B cell (primary cell): ENCODE measurements at regions of chr3 and their contacts with region 1.

Region 1: DNA sequence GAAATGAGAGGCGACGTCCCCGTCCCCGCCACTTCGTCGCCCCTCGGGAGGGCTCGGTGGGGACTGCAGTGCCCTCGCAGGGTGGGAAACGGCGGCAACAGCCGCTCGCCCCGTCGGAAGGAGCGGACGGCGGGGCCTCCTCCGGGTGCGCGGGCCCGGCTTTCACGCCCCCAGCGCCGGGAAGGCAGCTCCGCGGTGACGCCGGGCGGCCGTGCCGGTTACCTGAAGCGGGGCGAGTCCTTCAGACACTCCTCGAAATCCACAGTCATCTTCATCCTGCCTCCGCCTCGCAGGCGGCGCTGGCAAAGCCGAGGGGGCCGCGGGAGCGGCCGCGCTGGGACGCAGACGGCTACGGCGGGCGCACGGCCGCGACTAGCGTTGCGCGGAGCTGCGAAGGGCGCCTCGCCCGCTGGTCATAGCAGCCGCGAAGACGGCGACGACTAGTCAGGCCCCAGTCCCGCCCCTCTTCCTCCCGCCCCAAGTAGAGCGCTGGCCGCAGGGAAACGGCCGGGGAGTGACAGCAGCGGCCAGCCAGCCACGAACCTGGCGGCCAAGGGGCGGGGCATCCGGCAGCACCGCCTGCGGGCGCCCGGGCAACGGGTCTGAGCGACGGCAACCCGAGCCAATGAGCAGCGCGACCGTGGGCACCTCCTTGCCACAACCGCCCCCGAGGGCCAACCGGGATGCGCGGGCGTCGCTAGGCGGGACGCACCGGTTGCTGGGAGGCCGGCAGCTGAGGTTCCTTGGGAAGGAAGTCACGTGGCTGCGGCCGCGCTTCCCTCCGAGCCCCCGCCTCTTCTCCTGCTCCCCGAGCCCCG is at the start of gene ACAP2:
- DNase-seq: peak; percentile 99
- ATAC-seq: peak; percentile 87
- H3K4me3 ChIP-seq: peak within 1 kb of the TSS; percentile 69 to 92 (median 84)
- H3K4me3 Mint-ChIP-seq: peak within 1 kb of the TSS; percentile 94
- H3K27ac ChIP-seq: peak within 1 kb of the TSS; percentile 83 to 88
- H3K27ac Mint-ChIP-seq: peak within 1 kb of the TSS; percentile 97
- H3K4me1 ChIP-seq: peaks cover 29 to 33% of the 10 kb centered on the region in 2 donors
- H3K4me1 Mint-ChIP-seq: peaks cover 40% of the 10 kb centered on the region
- H3K27me3 ChIP-seq: no peaks in the 10 kb centered on the region
- H3K27me3 Mint-ChIP-seq: no peaks in the 10 kb centered on the region
- CTCF ChIP-seq: no peak
- total RNA-seq, gene ACAP2: 108 and 113 TPM in 2 replicates

Region 2: GRCh38 chr3:195094171-195094921 is 348.4 kb before region 1 on chr3:
- CTCF ChIA-PET with region 1: no interaction called
- POLR2A ChIA-PET with region 1: no interaction called
- intact Hi-C with region 1: no loop called
- DNase-seq: peak; percentile 87
- ATAC-seq: peak; percentile 85
- H3K4me3 ChIP-seq: peak overlapping the region in 4 of 5 experiments; percentile 36 to 63 (median 52)
- H3K4me3 Mint-ChIP-seq: peak overlapping the region; percentile 81
- H3K27ac ChIP-seq: peak overlapping the region; percentile 89 to 95
- H3K27ac Mint-ChIP-seq: peak overlapping the region; percentile 93
- H3K4me1 ChIP-seq: peaks cover 44 to 49% of the 10 kb centered on the region in 2 donors
- H3K4me1 Mint-ChIP-seq: peaks cover 54% of the 10 kb centered on the region
- H3K27me3 ChIP-seq: no peaks in the 10 kb centered on the region
- H3K27me3 Mint-ChIP-seq: no peaks in the 10 kb centered on the region
- CTCF ChIP-seq: no peak

Region 3: DNA sequence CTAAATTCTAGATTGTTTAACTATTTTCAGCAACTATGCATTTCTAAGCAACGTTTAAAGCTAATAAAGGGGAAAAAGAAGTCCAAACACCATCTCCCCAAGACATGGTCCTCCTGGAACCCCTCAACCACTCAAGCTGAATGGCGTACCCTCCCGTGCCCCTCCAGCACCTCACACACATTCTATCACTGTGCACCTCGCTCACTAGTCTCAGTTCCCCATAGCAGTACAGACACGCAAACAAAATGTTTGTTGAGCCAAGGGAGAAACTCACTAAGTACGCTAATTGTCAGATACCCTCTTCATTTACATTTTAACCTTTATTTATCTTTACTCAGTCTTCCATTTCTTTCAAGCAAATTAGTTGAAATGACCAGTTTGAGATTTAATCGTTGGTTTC is 48.8 kb before region 1 on chr3:
- CTCF ChIA-PET with region 1: no interaction called
- POLR2A ChIA-PET with region 1: interaction called, 8 read pairs
- intact Hi-C with region 1: loop called (anchors 2 kb)
- DNase-seq: peak; percentile 37
- ATAC-seq: peak; percentile 71
- H3K4me3 ChIP-seq: peak overlapping the region in 1 of 5 experiments; percentile 27
- H3K4me3 Mint-ChIP-seq: peak overlapping the region; percentile 65
- H3K27ac ChIP-seq: peak overlapping the region; percentile 18 to 68
- H3K27ac Mint-ChIP-seq: peak overlapping the region; percentile 69
- H3K4me1 ChIP-seq: peaks cover 26 to 41% of the 10 kb centered on the region in 2 donors
- H3K4me1 Mint-ChIP-seq: peaks cover 48% of the 10 kb centered on the region
- H3K27me3 ChIP-seq: no peaks in the 10 kb centered on the region
- H3K27me3 Mint-ChIP-seq: no peaks in the 10 kb centered on the region
- CTCF ChIP-seq: no peak

Region 4: GRCh38 chr3:195458316-195458717 is 15.5 kb after region 1 on chr3:
- CTCF ChIA-PET with region 1: interaction called, 3 read pairs
- POLR2A ChIA-PET with region 1: no interaction called
- intact Hi-C with region 1: loop called (anchors 1 kb)
- DNase-seq: peak; percentile 53
- ATAC-seq: peak; percentile 88
- H3K4me3 ChIP-seq: no peak overlapping the region
- H3K4me3 Mint-ChIP-seq: peak overlapping the region; percentile 27
- H3K27ac ChIP-seq: peak overlapping the region in 1 of 2 donors; percentile 32
- H3K27ac Mint-ChIP-seq: peak overlapping the region; percentile 85
- H3K4me1 ChIP-seq: peaks cover 9 to 10% of the 10 kb centered on the region in 2 donors
- H3K4me1 Mint-ChIP-seq: peaks cover 8% of the 10 kb centered on the region
- H3K27me3 ChIP-seq: no peaks in the 10 kb centered on the region
- H3K27me3 Mint-ChIP-seq: no peaks in the 10 kb centered on the region
- CTCF ChIP-seq: no peak

Region 5: DNA sequence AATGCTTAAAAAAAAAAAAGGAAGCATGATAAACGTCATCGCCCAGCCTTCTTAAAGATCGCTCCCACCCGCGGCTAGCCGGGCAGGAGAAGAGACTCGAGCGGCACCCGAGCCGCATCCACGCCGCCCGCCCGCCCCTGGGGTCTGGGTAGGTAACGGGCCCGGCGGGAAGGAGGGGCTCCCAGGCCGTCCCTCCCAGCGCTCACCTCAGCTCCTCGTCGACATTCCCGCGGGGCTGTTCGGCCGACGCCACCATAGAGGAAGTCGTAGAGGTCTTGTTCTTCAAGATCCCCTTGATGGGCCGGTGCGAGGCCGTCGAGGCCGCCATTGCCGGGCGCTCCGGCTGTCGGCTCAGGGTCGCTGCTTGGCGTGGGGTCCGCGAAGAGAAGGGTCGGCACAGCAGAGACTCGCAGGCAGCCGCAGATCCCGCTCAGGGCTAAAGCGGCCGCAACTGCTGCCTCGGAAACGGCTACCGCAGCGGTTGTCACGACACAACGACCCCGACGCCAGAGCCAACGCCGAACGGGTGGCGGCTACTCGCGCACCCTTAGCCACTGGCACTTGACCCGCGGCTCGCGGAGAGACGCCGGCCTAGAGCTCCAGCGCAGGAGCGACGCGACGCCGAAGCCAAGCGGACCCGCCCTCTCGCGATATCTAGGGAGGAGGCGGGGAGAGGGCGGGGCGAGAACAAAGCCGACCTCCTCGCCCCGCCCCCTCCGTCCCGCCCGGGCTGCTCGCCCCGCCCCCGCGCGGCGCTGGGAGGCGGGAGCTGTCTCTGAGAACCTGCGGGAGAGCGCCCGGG is 100.1 kb after region 1 on chr3 and contains the start of gene PPP1R2:
- CTCF ChIA-PET with region 1: interaction called, 3 read pairs
- POLR2A ChIA-PET with region 1: interaction called, 19 read pairs
- intact Hi-C with region 1: loop called (anchors 1 kb)
- DNase-seq: peak; percentile 95
- ATAC-seq: peak; percentile 90
- H3K4me3 ChIP-seq: peak within 1 kb of the TSS; percentile 75 to 95 (median 93)
- H3K4me3 Mint-ChIP-seq: peak within 1 kb of the TSS; percentile 97
- H3K27ac ChIP-seq: peak within 1 kb of the TSS; percentile 96 to 98
- H3K27ac Mint-ChIP-seq: peak within 1 kb of the TSS; percentile 96
- H3K4me1 ChIP-seq: peaks cover 58 to 65% of the 10 kb centered on the region in 2 donors
- H3K4me1 Mint-ChIP-seq: peaks cover 77% of the 10 kb centered on the region
- H3K27me3 ChIP-seq: no peaks in the 10 kb centered on the region
- H3K27me3 Mint-ChIP-seq: no peaks in the 10 kb centered on the region
- CTCF ChIP-seq: no peak
- total RNA-seq, gene PPP1R2: 73.8 and 81.8 TPM in 2 replicates

Region 6: GRCh38 chr3:195549931-195550519 is 107.2 kb after region 1 on chr3:
- CTCF ChIA-PET with region 1: no interaction called
- POLR2A ChIA-PET with region 1: interaction called, 11 read pairs
- intact Hi-C with region 1: no loop called
- DNase-seq: peak; percentile 69
- ATAC-seq: peak; percentile 87
- H3K4me3 ChIP-seq: peak overlapping the region; percentile 5 to 45 (median 35)
- H3K4me3 Mint-ChIP-seq: peak overlapping the region; percentile 80
- H3K27ac ChIP-seq: peak overlapping the region; percentile 72 to 83
- H3K27ac Mint-ChIP-seq: peak overlapping the region; percentile 92
- H3K4me1 ChIP-seq: peaks cover 46 to 49% of the 10 kb centered on the region in 2 donors
- H3K4me1 Mint-ChIP-seq: peaks cover 52% of the 10 kb centered on the region
- H3K27me3 ChIP-seq: no peaks in the 10 kb centered on the region
- H3K27me3 Mint-ChIP-seq: no peaks in the 10 kb centered on the region
- CTCF ChIP-seq: no peak

Region 7: DNA sequence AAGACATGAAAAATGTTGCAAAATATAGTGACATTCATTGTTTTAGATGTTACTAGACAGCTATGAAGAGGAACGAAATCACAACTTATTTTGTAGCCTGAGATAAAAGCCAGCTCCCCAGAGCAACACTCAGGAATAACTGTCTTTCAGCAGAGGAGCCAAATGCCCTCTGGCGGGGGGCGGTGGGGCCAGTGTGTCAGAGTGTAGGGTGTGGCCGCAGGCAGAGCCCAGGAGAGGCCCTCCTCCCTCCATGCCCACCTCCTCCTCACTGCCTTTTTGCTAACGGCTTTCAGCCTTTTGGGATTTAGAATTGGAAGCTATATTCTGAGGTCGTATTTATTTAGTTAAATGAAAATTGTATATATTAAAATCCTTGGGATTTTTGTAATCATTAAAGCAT is 124.0 kb after region 1 on chr3:
- CTCF ChIA-PET with region 1: no interaction called
- POLR2A ChIA-PET with region 1: no interaction called
- intact Hi-C with region 1: no loop called
- DNase-seq: no peak
- ATAC-seq: no peak
- H3K4me3 ChIP-seq: no peak overlapping the region
- H3K4me3 Mint-ChIP-seq: no peak overlapping the region
- H3K27ac ChIP-seq: no peak overlapping the region
- H3K27ac Mint-ChIP-seq: no peak overlapping the region
- H3K4me1 ChIP-seq: peaks cover 0 to 20% of the 10 kb centered on the region in 2 donors
- H3K4me1 Mint-ChIP-seq: peaks cover 23% of the 10 kb centered on the region
- H3K27me3 ChIP-seq: peaks cover 0 to 7% (median 0%) of the 10 kb centered on the region in 4 experiments
- H3K27me3 Mint-ChIP-seq: peaks cover 8% of the 10 kb centered on the region
- CTCF ChIP-seq: no peak